ENCODE measurements at regions of chr1 and their contacts with region 1.

Region 1: DNA sequence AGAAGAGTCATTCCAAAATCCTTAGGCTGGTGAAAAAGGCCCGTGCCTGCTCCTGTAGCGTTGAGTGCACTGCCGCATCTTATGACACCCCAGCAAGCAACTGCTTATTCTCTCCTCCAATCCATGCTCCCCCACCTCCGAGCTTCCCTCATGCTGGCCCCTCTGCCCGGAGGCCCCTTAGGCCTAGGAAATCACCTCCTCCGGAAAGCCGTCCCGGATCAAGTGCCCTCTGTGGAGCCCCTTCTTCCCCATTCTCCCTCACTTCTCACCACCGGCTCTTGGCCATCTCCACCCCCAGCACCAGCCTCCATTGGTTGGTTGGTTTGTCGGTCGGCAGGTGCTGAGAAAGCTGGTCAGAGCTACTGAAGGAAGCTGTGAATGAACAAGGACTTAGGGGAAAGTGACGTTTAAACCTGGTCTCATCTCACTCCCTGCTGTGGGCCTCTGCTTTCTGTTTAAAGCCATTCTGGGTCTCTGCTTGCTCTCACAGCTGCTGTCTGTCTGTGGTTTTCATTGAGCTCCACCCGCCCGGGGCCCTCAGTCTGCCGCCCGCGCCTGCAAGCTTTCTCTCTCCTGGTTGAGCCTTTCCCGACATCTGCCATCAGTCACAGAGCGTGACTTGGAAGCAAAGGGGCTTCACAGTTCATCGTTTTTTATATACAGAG is 122.2 kb downstream of the KCNN3 start:
- DNase-seq: no peak
- ATAC-seq: no peak
- H3K4me3 ChIP-seq: no peak overlapping the region
- H3K27ac ChIP-seq: no peak overlapping the region
- H3K4me1 ChIP-seq: peaks cover 20% of the 10 kb centered on the region
- H3K27me3 ChIP-seq: no peaks in the 10 kb centered on the region
- CTCF ChIP-seq: no peak

Region 2: GRCh38 chr1:154623358-154623757 is 124.5 kb before region 1 on chr1:
- intact Hi-C with region 1: no loop called
- DNase-seq: no peak
- ATAC-seq: no peak
- H3K4me3 ChIP-seq: no peak overlapping the region
- H3K27ac ChIP-seq: no peak overlapping the region
- H3K4me1 ChIP-seq: peaks cover 10% of the 10 kb centered on the region
- H3K27me3 ChIP-seq: no peaks in the 10 kb centered on the region
- CTCF ChIP-seq: no peak

Region 3: GRCh38 chr1:154796303-154796892 is 48.5 kb after region 1 on chr1:
- intact Hi-C with region 1: loop called in 1 of 2 experiments (anchors 5 kb)
- DNase-seq: no peak
- ATAC-seq: no peak
- H3K4me3 ChIP-seq: no peak overlapping the region
- H3K27ac ChIP-seq: no peak overlapping the region
- H3K4me1 ChIP-seq: peaks cover 11% of the 10 kb centered on the region
- H3K27me3 ChIP-seq: no peaks in the 10 kb centered on the region
- CTCF ChIP-seq: no peak

Region 4: GRCh38 chr1:154867064-154867825 is 119.4 kb after region 1 on chr1:
- intact Hi-C with region 1: loop called in 1 of 2 experiments (anchors 5 kb)
- DNase-seq: peak; percentile 67 to 87
- ATAC-seq: peak; percentile 54 to 69 (median 68)
- H3K4me3 ChIP-seq: peak overlapping the region; percentile 91
- H3K27ac ChIP-seq: peak overlapping the region; percentile 96
- H3K4me1 ChIP-seq: peaks cover 44% of the 10 kb centered on the region
- H3K27me3 ChIP-seq: no peaks in the 10 kb centered on the region
- CTCF ChIP-seq: no peak

Region 5: DNA sequence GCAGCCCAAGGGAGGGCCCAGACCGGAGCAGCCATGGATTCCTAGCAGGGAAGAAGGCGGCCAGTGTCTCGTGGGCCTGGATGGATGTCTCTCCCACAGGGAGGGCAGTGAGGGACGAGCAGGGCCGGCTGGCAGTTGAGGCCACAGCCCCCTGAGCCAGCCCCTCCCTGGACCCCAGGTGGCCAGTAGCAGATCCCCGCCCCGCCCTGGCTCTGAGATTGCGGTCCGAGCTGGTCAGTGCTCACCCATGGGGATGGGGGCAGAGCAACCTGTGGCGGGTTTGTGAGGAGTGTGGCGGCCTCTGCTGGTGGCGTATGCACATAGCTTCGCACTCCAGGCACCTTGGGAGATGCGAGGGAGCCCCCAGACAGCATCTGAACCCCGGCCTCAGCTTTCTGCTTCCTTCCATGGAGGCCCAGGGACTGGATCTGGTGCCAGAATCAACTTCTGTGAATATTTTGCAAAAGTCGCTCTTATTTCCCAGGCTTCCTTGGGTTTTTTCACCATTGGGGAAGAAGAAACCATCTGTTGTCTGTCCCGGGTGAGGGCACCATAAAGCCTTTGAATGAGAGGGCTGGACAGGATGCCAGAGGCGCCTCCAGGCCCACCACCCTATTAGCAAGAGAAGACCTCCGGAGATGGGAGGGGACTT is 130.6 kb after region 1 on chr1:
- intact Hi-C with region 1: no loop called
- DNase-seq: peak; percentile 80 to 91
- ATAC-seq: peak; percentile 94 to 98 (median 96)
- H3K4me3 ChIP-seq: no peak overlapping the region
- H3K27ac ChIP-seq: no peak overlapping the region
- H3K4me1 ChIP-seq: peaks cover 6% of the 10 kb centered on the region
- H3K27me3 ChIP-seq: no peaks in the 10 kb centered on the region
- CTCF ChIP-seq: peak; percentile 92